Mucosa of descending colon (tissue), 3 donors: ENCODE measurements at regions of chr3 and their contacts with region 1.

Region 1: DNA sequence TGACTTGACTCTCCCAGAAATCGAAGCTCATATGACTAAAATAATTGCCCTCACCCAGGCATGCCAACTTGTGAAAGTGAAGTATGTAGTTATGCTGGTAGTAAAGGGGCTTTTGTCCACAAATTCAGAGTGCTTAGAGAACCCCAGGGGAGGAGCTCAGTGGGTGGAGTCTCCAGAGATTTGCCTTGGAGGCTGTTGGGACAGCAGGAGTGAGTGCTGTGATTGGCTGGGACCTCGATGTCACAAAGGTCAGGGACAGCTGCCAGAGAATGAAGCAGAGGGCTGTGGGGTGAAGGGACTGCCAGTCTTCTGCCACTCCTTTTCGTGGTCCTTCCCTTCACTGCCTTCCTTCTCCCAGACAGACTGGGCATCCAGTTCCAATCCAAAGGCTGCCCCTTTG is 49.8 kb downstream of the ZNF445 start:
- DNase-seq: no peak
- ATAC-seq: no peak
- H3K4me3 ChIP-seq: no peak overlapping the region
- H3K4me1 ChIP-seq: no peaks in the 10 kb centered on the region
- CTCF ChIP-seq: no peak

Region 2: DNA sequence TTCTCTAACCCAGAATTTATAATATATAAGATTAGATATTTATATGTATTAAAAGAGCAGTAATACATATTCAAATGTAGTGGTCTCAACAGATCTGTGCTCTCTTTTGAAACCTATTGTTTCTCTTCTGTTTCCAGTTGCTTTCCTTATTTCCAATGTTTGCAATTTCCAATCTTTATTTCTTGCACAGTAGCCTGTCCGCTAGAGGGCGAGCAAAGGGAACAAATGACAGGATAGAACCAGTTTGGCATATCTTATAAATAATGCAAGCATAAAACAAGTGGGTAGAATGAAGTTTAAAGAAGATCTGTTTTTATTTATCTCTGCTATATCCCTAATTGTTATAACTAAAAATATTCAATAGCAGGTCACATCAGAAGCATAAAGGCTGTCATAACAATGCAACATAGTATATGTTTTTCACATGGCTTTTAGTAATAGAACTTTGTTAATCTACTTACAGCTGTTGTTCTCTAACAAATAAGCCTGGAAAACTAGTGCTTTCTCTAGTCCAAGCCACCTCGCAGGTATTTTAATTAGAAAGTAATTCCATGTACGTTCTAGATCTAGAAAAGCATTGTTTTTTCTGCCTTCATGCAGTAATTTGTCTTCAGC is 104.2 kb before region 1 on chr3:
- intact Hi-C with region 1: no loop called
- DNase-seq: peak in 2 of 3 donors; percentile 57 to 93
- ATAC-seq: peak; percentile 76
- H3K4me3 ChIP-seq: no peak overlapping the region
- H3K4me1 ChIP-seq: no peaks in the 10 kb centered on the region
- CTCF ChIP-seq: peak; percentile 54

Region 3: DNA sequence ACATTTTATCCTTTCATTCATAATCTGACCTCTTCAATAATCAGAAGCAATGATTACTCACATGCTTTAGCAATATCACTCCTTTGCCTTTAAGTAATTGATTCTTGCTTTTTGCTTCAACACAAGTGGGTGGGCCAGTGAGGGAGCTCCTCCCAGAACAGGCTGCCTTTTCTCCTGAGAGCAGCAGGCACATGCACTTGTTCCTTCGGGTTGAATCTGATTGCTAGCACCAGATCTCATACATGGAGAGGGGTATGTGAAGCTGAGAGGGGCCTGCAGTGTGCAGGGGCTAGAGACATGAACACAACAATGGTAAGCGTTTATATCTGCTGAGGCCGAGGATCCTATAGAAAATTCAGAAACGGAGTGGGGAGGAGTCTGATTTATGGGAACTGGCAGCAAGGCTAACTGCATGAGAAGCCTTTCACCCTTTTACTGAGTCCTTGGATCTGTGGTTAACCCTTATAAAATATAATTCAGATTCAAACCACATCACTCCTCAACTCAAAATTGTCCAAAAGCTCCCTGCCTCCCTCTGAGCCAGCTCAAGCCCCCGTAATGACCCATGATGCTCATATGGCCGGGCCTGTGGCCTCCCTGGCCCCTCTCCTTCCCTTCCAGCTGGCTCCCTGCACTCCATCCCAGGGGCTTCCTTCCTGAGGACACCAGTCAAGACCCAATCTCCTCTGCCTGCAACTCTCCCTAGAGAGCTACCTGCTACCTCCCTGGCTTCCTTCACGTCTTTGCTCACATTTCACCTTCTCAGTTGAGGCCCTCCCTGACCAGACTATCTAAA is 17.4 kb after region 1 on chr3:
- intact Hi-C with region 1: loop called in 1 of 2 experiments (anchors 2 kb)
- DNase-seq: no peak
- ATAC-seq: no peak
- H3K4me3 ChIP-seq: no peak overlapping the region
- H3K4me1 ChIP-seq: peaks cover 8% of the 10 kb centered on the region
- CTCF ChIP-seq: no peak